Right ventricle myocardium inferior (tissue), 1 donor: ENCODE measurements at regions of chr2 and their contacts with region 1.

Region 1: GRCh38 chr2:163182764-163183354 is 344.3 kb upstream of the KCNH7 start:
- DNase-seq: no peak
- ATAC-seq: no peak

Region 2: DNA sequence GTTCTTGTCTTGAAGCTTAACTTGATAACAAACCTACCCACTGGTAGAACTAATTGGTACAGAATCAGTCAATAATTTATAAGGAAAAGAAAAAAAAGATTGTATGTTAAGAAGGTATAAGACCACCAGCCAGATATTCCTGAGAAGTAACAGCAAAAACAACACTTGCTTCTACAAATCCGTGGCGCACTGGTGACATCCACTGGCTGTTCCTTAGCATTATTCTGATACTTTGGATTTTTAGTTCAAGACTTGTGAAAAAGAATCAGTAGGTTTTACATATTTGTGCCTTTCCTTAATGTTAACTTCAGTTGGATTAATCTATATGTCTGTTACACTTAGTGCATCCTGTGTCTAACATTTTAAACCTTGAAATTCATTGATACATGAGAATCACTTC is 1296.6 kb after region 1 on chr2:
- intact Hi-C with region 1: loop called (anchors 5 kb)
- DNase-seq: no peak
- ATAC-seq: no peak